ENCODE measurements at regions of chr11 and their contacts with region 1.

Region 1: DNA sequence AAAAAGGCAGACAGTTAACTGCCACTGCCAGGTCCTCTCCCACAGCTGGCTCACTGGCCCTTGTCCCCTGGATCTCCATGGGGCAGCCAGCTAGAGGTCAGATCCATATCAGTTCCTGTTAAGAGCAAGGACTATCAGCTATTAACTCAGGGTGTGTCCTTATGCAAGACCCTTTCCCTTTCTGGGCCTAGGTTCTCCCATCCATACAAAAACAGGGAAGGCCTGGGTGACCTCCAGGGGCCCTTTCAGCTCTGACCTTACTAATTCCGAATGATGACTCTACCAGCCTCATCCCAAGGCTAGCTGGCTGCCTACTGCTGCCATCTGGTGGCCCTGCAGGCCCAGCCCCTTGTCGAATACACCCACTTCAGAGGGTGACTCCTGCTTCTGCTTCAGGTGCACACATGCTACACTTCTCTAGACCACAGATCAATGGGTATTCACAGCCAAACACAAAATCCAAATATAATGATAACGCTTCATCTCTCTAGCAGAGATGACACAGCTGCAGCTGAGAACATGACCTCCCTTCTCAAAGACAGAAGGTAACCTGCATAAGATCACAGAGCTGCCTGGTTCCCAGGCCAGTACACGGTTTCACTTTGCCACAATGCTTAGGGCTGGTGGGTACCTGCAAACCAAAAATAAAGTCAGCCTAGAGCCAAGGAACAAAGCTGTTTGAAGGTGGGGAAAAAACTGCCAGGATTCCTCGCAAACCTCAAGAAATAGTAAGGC is 34.1 kb downstream of the SERGEF start:
- DNase-seq: peak; percentile 31 to 55 (median 42)
- ATAC-seq: peak; percentile 64
- H3K4me3 ChIP-seq: no peak overlapping the region
- H3K27ac ChIP-seq: no peak overlapping the region
- H3K4me1 ChIP-seq: no peaks in the 10 kb centered on the region
- H3K27me3 ChIP-seq: no peaks in the 10 kb centered on the region
- CTCF ChIP-seq: peak in 6 of 7 experiments; percentile 41 to 57 (median 54)
- POLR2A ChIP-seq: no peak

Region 2: DNA sequence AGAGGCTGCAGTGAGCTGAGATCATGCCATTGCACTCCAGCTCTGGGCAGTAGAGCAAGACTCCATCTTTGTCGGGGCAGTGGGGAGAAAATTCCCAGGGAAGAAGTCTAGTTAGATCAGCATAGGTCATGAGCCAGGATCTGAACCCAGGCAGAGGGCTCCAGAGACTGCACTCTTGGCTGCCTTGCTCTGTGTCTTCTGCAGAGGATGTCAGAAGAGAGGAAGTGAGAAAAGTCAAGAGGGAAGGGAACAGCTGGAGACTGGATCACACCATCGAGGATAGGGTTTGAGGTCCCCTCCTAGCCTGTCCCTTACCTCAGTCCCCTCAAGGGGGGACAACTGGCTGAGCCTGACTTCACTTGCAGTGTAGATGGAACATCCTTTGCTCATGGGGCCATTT is 253.5 kb before region 1 on chr11:
- intact Hi-C with region 1: loop called (anchors 5 kb)
- DNase-seq: no peak
- ATAC-seq: no peak
- H3K4me3 ChIP-seq: no peak overlapping the region
- H3K27ac ChIP-seq: no peak overlapping the region
- H3K4me1 ChIP-seq: peaks cover 19% of the 10 kb centered on the region
- H3K27me3 ChIP-seq: peaks cover 0 to 18% of the 10 kb centered on the region in 2 donors
- CTCF ChIP-seq: no peak
- POLR2A ChIP-seq: no peak

Region 3: GRCh38 chr11:17760102-17761029 is 218.4 kb before region 1 on chr11:
- intact Hi-C with region 1: loop called (anchors 10 kb)
- DNase-seq: peak; percentile 47 to 74 (median 60)
- ATAC-seq: peak; percentile 55
- H3K4me3 ChIP-seq: no peak overlapping the region
- H3K27ac ChIP-seq: no peak overlapping the region
- H3K4me1 ChIP-seq: no peaks in the 10 kb centered on the region
- H3K27me3 ChIP-seq: no peaks in the 10 kb centered on the region
- CTCF ChIP-seq: peak in 6 of 7 experiments; percentile 19 to 73 (median 57)
- POLR2A ChIP-seq: no peak

Region 4: DNA sequence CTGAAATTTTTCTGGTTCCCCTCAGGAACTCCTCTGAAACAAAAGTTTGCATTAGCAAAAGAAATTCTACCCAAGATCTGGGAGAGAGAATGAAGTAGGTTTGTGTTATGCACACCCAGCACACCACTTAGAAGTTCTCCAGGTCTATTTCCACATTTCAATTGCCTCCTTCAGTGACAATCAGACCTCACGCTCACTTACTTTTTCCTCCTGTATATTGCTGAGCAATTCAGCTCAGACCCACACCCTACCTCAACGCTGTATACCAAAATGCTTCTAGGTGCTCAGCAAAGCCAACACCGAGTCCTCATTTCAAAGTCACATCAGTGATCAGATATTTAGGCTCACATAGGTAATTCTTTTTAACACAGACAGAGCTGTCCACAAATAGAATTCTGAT is 172.9 kb after region 1 on chr11:
- intact Hi-C with region 1: no loop called
- DNase-seq: no peak
- ATAC-seq: no peak
- H3K4me3 ChIP-seq: no peak overlapping the region
- H3K27ac ChIP-seq: no peak overlapping the region
- H3K4me1 ChIP-seq: no peaks in the 10 kb centered on the region
- H3K27me3 ChIP-seq: no peaks in the 10 kb centered on the region
- CTCF ChIP-seq: no peak
- POLR2A ChIP-seq: no peak